ENCODE measurements at regions of chr4 and their contacts with region 1.

Region 1: DNA sequence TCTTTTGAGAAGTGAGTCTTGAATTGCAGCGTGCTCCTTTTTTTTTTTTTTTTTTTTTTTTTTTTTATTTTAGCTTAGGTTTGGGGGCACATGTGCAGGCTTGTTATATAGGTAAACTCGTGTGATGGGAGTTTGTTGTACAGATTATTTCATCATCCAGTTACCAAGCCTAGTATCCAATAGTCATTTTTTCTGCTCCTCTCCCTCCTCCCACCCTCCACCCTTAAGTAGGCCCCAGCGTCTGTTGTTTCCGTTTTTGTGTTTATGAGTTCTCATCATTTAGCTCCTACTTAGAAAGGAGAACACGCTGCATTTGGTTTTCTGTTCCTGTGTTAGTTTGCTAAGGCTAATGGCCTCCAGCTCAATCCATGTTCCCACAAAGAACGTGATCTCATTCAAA is 81.3 kb upstream of the TSPAN5 start:
- DNase-seq: no peak
- ATAC-seq: no peak
- H3K4me3 Mint-ChIP-seq: no peak overlapping the region
- H3K27ac Mint-ChIP-seq: no peak overlapping the region
- H3K4me1 Mint-ChIP-seq: no peaks in the 10 kb centered on the region
- H3K27me3 Mint-ChIP-seq: no peaks in the 10 kb centered on the region
- CTCF ChIP-seq: no peak

Region 2: DNA sequence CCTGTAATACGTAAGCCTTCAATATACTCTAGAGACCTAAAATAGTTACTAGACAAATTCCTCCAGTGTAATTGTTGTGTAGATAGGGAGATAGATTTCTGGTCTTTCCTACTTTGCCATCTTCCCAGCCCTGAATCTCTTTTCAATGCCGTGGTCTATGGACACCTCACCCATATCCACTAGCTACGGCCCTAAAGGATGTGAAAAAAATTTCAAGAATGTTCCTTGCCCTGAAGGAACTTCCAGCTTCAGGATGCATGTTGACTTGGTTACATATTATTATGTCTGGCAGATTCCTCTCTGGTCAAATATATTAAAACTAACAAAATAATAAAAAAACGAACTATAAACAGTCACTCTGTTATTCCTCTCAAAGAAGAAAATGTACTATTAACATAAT is 28.9 kb before region 1 on chr4:
- CTCF ChIA-PET with region 1: no interaction called
- POLR2A ChIA-PET with region 1: no interaction called
- DNase-seq: no peak
- ATAC-seq: no peak
- H3K4me3 Mint-ChIP-seq: no peak overlapping the region
- H3K27ac Mint-ChIP-seq: no peak overlapping the region
- H3K4me1 Mint-ChIP-seq: peaks cover 3% of the 10 kb centered on the region; the same call in 1 of the 2 replicates
- H3K27me3 Mint-ChIP-seq: no peaks in the 10 kb centered on the region
- CTCF ChIP-seq: no peak

Region 3: GRCh38 chr4:98720871-98721480 is 18.8 kb before region 1 on chr4:
- CTCF ChIA-PET with region 1: no interaction called
- POLR2A ChIA-PET with region 1: no interaction called
- DNase-seq: no peak
- ATAC-seq: no peak
- H3K4me3 Mint-ChIP-seq: no peak overlapping the region
- H3K27ac Mint-ChIP-seq: no peak overlapping the region
- H3K4me1 Mint-ChIP-seq: no peaks in the 10 kb centered on the region
- H3K27me3 Mint-ChIP-seq: peaks cover 5% of the 10 kb centered on the region
- CTCF ChIP-seq: no peak

Region 4: GRCh38 chr4:98802770-98803198 is 63.0 kb after region 1 on chr4:
- CTCF ChIA-PET with region 1: no interaction called
- POLR2A ChIA-PET with region 1: interaction called, 11 read pairs
- DNase-seq: no peak
- ATAC-seq: no peak
- H3K4me3 Mint-ChIP-seq: no peak overlapping the region
- H3K27ac Mint-ChIP-seq: no peak overlapping the region
- H3K4me1 Mint-ChIP-seq: peaks cover 8% of the 10 kb centered on the region
- H3K27me3 Mint-ChIP-seq: peaks cover 3% of the 10 kb centered on the region; the same call in 1 of the 2 replicates
- CTCF ChIP-seq: no peak

Region 5: GRCh38 chr4:98928505-98929340 is 189.0 kb after region 1 on chr4 and contains the start of gene EIF4E:
- CTCF ChIA-PET with region 1: no interaction called
- POLR2A ChIA-PET with region 1: interaction called, 13 read pairs
- DNase-seq: peak; percentile 95
- ATAC-seq: peak; percentile 84
- H3K4me3 Mint-ChIP-seq: peak within 1 kb of the TSS; percentile 95
- H3K27ac Mint-ChIP-seq: peak within 1 kb of the TSS; percentile 97
- H3K4me1 Mint-ChIP-seq: peaks cover 23% of the 10 kb centered on the region
- H3K27me3 Mint-ChIP-seq: peaks cover 7% of the 10 kb centered on the region; the same call in 1 of the 2 replicates
- CTCF ChIP-seq: no peak
- total RNA-seq, gene EIF4E: 146 to 174 TPM (median 155 TPM) in 3 replicates